ENCODE measurements at regions of chr4 and their contacts with region 1.

Region 1: GRCh38 chr4:118278473-118279274 is 74.1 kb downstream of the PRSS12 start:
- DNase-seq: peak; percentile 93
- ATAC-seq: peak; percentile 87
- H3K4me3 ChIP-seq: peak overlapping the region; percentile 87 to 92 (median 87)
- H3K27ac ChIP-seq: peak overlapping the region; percentile 95
- H3K4me1 ChIP-seq: peaks cover 44% of the 10 kb centered on the region
- H3K27me3 ChIP-seq: no peaks in the 10 kb centered on the region; a peak in 1 of 5 replicates
- CTCF ChIP-seq: no peak
- EP300 ChIP-seq: peak in 1 of 2 experiments; percentile 7; a peak in 1 of 4 replicates
- POLR2A ChIP-seq: peak; percentile 96 to 100
- RAD21 ChIP-seq: peak; percentile 39

Region 2: GRCh38 chr4:118076958-118077766 is 201.5 kb before region 1 on chr4:
- CTCF ChIA-PET with region 1: no interaction called
- POLR2A ChIA-PET with region 1: no interaction called
- in situ Hi-C with region 1: loop called (anchors 10 kb)
- intact Hi-C with region 1: no loop called
- DNase-seq: peak; percentile 31
- ATAC-seq: peak; percentile 91
- H3K4me3 ChIP-seq: no peak overlapping the region
- H3K27ac ChIP-seq: no peak overlapping the region
- H3K4me1 ChIP-seq: no peaks in the 10 kb centered on the region
- H3K27me3 ChIP-seq: no peaks in the 10 kb centered on the region
- CTCF ChIP-seq: peak; percentile 67
- EP300 ChIP-seq: no peak
- POLR2A ChIP-seq: no peak
- RAD21 ChIP-seq: no peak

Region 3: DNA sequence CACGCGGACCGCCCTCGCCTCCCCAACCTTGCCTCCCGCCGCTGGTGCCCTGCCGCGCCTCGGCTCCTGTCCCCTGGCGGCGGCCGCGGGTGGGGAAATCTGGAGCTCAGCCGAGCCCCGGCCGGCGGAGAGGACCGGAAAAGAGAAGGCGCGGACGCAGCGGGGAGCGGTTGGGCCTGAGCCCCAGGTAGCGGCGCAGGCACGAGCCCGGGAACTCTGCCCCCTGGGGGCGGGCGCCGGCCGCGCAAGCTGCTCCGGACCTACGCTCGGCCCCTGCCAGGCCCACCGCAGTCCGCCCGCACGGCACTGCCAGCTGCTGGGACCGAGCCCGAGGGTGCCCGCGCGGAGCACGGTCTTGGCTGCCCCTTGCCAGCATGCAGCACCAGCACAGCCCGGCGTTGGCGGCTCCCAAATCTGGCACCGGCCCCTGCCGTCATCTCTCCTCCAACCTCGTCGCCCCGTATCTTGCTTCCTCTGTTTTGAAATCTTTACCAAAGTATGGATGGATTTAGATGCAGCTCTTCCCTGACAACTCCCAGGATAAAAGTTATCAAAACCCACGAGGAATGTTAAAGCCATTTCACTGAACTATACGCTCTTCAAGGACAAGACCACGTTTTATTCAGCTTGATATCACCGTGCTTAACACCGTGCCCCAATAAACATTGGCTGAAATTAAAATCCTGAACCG is 74.3 kb after region 1 on chr4 and contains the start of gene PRSS12:
- CTCF ChIA-PET with region 1: interaction called, 3 read pairs
- POLR2A ChIA-PET with region 1: no interaction called
- in situ Hi-C with region 1: no loop called
- intact Hi-C with region 1: loop called (anchors 1 kb)
- DNase-seq: peak; percentile 28
- ATAC-seq: peak; percentile 99
- H3K4me3 ChIP-seq: peak within 1 kb of the TSS; percentile 39 to 69 (median 45); a peak in 5 of 6 replicates
- H3K27ac ChIP-seq: no peak within 1 kb of the TSS
- H3K4me1 ChIP-seq: peaks cover 7% of the 10 kb centered on the region; the same call in 1 of the 2 replicates
- H3K27me3 ChIP-seq: peaks cover 3 to 37% of the 10 kb centered on the region in 2 experiments; a peak in 3 of 5 replicates
- CTCF ChIP-seq: peak; percentile 74
- EP300 ChIP-seq: no peak
- POLR2A ChIP-seq: no peak
- RAD21 ChIP-seq: peak; percentile 64
- total RNA-seq, gene PRSS12: 0.02 and 0.08 TPM in 2 replicates

Region 4: DNA sequence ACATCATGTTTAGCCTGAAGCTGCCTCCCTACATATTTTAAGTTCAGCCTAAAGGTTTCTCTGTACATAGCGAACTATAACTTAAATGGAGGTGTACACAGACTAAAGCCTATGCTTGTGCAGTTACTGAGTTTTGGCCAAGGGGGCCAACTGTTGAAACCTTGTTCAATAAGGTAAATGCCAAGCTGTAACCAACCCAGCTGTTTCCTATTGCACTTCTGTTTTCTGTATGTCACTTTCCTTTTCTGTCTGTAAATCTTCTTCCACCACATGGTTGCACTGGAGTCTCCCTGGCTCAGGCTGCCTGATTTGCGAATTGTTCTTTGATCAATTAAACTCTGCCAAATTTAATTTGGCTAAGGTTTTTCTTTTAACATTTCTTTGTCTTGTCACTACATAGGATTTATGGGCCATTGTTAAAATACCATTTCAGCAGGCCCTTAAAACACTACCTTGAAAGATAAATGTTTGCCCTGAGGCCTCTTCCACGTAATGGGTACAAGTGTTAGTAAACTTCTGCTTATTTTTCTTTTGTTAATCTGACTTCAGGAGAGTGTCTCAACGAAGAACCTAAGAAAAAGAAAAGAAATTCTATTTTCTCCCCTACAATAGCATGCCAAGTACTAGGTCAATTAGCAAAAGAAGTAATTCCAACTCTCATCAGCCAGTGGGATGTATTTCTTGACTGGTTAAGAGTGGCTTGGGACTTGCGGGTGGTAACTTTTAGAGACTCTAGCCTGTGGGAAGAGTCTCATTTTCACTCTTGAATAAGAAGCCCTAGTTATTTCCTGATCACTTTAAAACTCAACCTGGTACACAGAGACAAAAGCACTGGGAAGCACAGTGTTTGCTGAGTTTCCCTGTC is 119.8 kb after region 1 on chr4:
- CTCF ChIA-PET with region 1: no interaction called
- POLR2A ChIA-PET with region 1: no interaction called
- in situ Hi-C with region 1: no loop called
- intact Hi-C with region 1: no loop called
- DNase-seq: no peak
- ATAC-seq: no peak
- H3K4me3 ChIP-seq: no peak overlapping the region
- H3K27ac ChIP-seq: no peak overlapping the region
- H3K4me1 ChIP-seq: no peaks in the 10 kb centered on the region
- H3K27me3 ChIP-seq: no peaks in the 10 kb centered on the region; a peak in 2 of 5 replicates
- CTCF ChIP-seq: no peak
- EP300 ChIP-seq: no peak
- POLR2A ChIP-seq: no peak
- RAD21 ChIP-seq: no peak

Region 5: DNA sequence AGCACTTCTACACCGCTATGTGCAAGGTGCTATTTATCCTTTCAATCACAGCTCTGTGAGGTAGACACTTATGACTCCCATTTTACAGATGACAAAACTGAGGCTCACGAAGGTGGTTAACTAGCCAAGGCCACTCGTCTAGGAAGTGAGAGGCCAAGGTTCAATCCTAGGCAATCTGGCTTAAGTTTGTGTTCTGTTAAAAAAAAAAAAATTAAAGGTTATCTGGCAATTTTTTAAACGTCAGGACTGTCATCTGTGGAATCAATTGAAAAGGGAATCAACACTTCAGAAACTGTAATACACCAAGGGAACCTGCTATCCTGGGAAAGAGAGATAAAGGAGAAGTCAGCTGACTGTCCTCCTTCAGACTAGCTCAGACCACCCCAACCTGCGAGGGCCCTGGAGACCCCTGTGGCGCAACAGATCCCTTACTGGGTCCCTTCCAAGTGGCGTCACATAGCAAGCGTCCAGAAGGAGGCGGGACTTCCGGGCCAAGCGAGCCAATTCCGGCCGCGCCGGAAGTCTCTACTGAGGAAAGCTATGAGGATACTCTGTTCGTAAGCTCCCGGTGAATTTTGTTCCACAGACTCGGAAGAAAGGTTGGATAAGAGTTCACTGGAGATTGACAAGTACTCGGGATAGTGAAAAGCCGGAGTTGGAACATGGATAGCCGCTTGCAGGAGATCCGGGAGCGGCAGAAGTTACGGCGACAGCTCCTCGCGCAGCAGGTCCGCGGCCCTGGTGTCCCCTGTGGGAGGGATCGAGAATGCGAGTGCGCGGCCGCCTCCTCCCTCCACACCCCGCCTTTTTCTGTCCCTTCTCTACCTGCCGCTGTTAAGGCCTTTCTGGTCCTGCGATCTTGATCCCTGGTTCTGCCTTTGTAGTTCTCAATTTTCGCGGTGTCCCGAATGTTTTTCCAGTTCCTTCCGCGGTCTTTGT is 406.5 kb after region 1 on chr4 and contains the start of gene METTL14:
- CTCF ChIA-PET with region 1: no interaction called
- POLR2A ChIA-PET with region 1: no interaction called
- in situ Hi-C with region 1: no loop called
- intact Hi-C with region 1: loop called (anchors 5 kb)
- DNase-seq: peak; percentile 88
- ATAC-seq: peak; percentile 97
- H3K4me3 ChIP-seq: peak within 1 kb of the TSS; percentile 83 to 88 (median 85)
- H3K27ac ChIP-seq: peak within 1 kb of the TSS; percentile 81
- H3K4me1 ChIP-seq: peaks cover 37% of the 10 kb centered on the region
- H3K27me3 ChIP-seq: no peaks in the 10 kb centered on the region; a peak in 1 of 5 replicates
- CTCF ChIP-seq: no peak
- EP300 ChIP-seq: no peak
- POLR2A ChIP-seq: peak; percentile 74 to 89
- RAD21 ChIP-seq: 0 out of 2 replicates have a peak, but pooled peaks have one; percentile 20
- total RNA-seq, gene METTL14: 44.9 and 68.5 TPM in 2 replicates